ENCODE measurements at regions of chr1 and their contacts with region 1.

Region 1: DNA sequence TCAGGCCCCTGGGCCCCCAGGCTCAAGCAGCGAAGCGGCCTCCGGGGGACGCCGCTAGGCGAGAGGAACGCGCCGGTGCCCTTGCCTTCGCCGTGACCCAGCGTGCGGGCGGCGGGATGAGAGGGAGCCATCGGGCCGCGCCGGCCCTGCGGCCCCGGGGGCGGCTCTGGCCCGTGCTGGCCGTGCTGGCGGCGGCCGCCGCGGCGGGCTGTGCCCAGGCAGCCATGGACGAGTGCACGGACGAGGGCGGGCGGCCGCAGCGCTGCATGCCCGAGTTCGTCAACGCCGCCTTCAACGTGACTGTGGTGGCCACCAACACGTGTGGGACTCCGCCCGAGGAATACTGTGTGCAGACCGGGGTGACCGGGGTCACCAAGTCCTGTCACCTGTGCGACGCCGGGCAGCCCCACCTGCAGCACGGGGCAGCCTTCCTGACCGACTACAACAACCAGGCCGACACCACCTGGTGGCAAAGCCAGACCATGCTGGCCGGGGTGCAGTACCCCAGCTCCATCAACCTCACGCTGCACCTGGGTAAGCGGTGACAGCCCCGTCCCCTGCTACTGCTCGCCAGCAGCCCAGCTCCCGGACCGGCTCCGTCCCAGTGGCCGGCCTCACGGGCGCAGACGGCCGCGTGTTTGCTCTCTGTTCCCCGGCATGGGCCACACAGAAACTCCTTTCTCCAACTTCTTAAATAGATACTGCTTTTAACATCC is 539 bp downstream of the LAMC1 start:
- DNase-seq: peak; percentile 84
- ATAC-seq: peak; percentile 73
- H3K4me3 ChIP-seq: peak overlapping the region; percentile 45 to 82 (median 68)
- H3K4me3 Mint-ChIP-seq: peak overlapping the region; percentile 99
- H3K27ac ChIP-seq: peak overlapping the region in 1 of 2 donors; percentile 20
- H3K27ac Mint-ChIP-seq: peak overlapping the region; percentile 97
- H3K4me1 ChIP-seq: peaks cover 19 to 21% of the 10 kb centered on the region in 2 donors
- H3K4me1 Mint-ChIP-seq: peaks cover 45% of the 10 kb centered on the region
- H3K27me3 ChIP-seq: no peaks in the 10 kb centered on the region
- H3K27me3 Mint-ChIP-seq: no peaks in the 10 kb centered on the region
- CTCF ChIP-seq: peak; percentile 75

Region 2: GRCh38 chr1:183048087-183049085 is 24.6 kb after region 1 on chr1:
- CTCF ChIA-PET with region 1: interaction called, 6 read pairs
- POLR2A ChIA-PET with region 1: no interaction called
- intact Hi-C with region 1: loop called (anchors 2 kb)
- DNase-seq: peak; percentile 79
- ATAC-seq: peak; percentile 97
- H3K4me3 ChIP-seq: peak overlapping the region in 1 of 5 experiments; percentile 47
- H3K4me3 Mint-ChIP-seq: peak overlapping the region; percentile 54
- H3K27ac ChIP-seq: peak overlapping the region; percentile 61 to 77
- H3K27ac Mint-ChIP-seq: peak overlapping the region; percentile 75
- H3K4me1 ChIP-seq: peaks cover 35 to 45% of the 10 kb centered on the region in 2 donors
- H3K4me1 Mint-ChIP-seq: peaks cover 62% of the 10 kb centered on the region
- H3K27me3 ChIP-seq: no peaks in the 10 kb centered on the region
- H3K27me3 Mint-ChIP-seq: no peaks in the 10 kb centered on the region
- CTCF ChIP-seq: no peak

Region 3: DNA sequence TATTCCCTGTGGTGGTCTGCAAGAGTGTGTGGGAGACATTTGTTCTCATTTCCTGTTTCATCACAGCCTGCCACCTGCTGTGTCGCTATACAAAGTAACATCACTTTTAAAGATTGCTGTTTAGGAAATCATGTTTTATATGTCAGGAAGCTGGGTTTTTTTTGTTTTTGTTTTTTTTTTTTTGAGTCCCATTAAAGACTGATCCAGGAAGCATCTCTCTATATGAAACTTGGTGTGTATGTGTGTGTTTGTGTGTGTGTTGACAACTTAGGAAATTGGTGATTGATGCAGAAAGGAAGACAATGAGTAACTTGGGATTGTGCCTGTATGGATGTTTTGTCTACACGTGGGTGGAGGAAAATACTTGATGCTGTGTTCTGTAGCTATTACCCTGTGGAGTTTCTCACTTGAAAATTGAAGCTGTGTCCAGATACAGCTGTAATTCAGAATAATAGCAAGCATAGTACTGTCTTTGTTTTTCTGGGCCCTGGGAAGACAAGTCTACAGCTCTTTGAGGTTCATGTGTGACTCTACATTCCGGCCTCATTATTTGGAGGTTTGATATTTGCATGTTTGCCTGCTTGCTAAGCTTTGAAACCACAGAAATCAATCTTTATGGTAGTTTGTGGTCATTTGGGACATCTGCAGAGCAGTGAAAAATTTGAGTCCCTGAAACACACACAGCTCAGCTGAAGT is 47.3 kb after region 1 on chr1:
- CTCF ChIA-PET with region 1: interaction called, 5 read pairs
- POLR2A ChIA-PET with region 1: no interaction called
- intact Hi-C with region 1: loop called (anchors 5 kb)
- DNase-seq: peak; percentile 37
- ATAC-seq: peak; percentile 70
- H3K4me3 ChIP-seq: peak overlapping the region in 1 of 5 experiments; percentile 11
- H3K4me3 Mint-ChIP-seq: peak overlapping the region; percentile 55
- H3K27ac ChIP-seq: no peak overlapping the region
- H3K27ac Mint-ChIP-seq: peak overlapping the region; percentile 64
- H3K4me1 ChIP-seq: peaks cover 21 to 22% of the 10 kb centered on the region in 2 donors
- H3K4me1 Mint-ChIP-seq: peaks cover 36% of the 10 kb centered on the region
- H3K27me3 ChIP-seq: peaks cover 0 to 3% (median 0%) of the 10 kb centered on the region in 4 experiments
- H3K27me3 Mint-ChIP-seq: peaks cover 6% of the 10 kb centered on the region
- CTCF ChIP-seq: no peak